ENCODE measurements at regions of chr3 and their contacts with region 1.

Region 1: DNA sequence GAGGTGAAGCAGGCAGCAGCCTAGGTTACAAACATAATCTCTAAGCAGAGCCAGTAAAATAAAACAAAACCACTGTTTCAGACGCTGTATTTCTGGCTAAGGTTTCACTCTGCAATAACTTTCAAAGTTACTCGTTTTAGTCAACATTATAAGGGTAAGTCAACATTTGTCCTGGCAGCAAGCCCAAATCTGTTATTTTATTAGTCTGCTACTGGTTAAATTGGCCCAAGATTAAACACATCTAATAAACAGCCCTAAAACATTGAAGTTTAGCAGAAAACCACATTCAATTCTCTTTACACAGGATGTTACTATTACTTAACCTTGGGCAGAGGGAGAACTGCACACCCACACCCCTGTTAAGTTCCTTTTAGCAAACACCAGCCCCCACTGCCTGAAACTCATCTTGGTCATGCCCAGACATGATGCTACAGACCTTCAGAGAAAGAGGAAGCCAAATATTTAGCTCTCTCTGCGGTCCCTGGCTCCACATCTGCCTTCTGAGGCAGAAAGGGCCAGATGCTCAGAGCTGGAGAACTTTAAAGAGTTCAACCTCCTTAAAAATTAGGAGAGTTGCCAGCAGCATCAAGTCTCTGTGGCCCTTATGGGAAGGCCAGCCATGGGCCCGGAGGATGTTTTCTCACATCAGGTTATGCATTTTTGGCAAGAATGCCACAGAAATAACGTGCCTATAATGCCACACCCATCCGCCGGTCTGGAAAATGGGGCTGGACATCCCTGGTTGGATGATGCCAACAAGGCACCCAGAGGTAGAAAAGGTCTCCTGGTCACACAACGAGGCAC is 17.9 kb downstream of the ARHGEF3 start:
- DNase-seq: peak; percentile 92
- H3K4me3 Mint-ChIP-seq: peak overlapping the region; percentile 75
- H3K27ac Mint-ChIP-seq: peak overlapping the region; percentile 95
- H3K4me1 Mint-ChIP-seq: peaks cover 87% of the 10 kb centered on the region
- H3K27me3 Mint-ChIP-seq: no peaks in the 10 kb centered on the region

Region 2: GRCh38 chr3:56753206-56753820 is 30.5 kb before region 1 on chr3:
- intact Hi-C with region 1: loop called (anchors 1 kb)
- DNase-seq: peak; percentile 82
- H3K4me3 Mint-ChIP-seq: peak overlapping the region; percentile 67
- H3K27ac Mint-ChIP-seq: peak overlapping the region; percentile 80
- H3K4me1 Mint-ChIP-seq: peaks cover 62% of the 10 kb centered on the region
- H3K27me3 Mint-ChIP-seq: no peaks in the 10 kb centered on the region

Region 3: GRCh38 chr3:56758539-56758981 is 25.3 kb before region 1 on chr3:
- intact Hi-C with region 1: loop called (anchors 1 kb)
- DNase-seq: peak; percentile 80
- H3K4me3 Mint-ChIP-seq: peak overlapping the region; percentile 77
- H3K27ac Mint-ChIP-seq: peak overlapping the region; percentile 90
- H3K4me1 Mint-ChIP-seq: peaks cover 75% of the 10 kb centered on the region
- H3K27me3 Mint-ChIP-seq: no peaks in the 10 kb centered on the region

Region 4: DNA sequence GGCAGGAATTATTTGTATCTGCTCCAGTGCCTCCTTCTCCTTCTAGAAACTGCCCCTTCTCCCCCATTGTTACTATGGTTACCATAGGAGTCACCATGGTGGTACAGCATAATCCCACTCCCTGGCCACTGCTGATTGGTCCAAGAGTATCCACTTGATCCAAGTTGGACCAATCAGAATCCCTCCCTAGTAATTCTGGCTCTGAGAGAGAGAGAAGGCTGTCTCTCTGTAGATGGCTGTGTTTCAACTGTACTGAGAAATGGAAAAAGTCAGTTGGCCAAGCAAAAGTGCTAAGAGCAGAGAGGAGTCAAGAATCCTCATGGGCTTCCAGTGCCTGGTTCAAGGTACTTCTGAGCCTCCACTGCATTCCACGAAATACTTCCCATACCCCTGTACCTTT is 156.0 kb after region 1 on chr3:
- intact Hi-C with region 1: no loop called
- DNase-seq: no peak
- H3K4me3 Mint-ChIP-seq: no peak overlapping the region
- H3K27ac Mint-ChIP-seq: no peak overlapping the region
- H3K4me1 Mint-ChIP-seq: peaks cover 20% of the 10 kb centered on the region
- H3K27me3 Mint-ChIP-seq: no peaks in the 10 kb centered on the region

Measured in activated CD4-positive, alpha-beta T cell treated with anti-CD3 and anti-CD28 coated beads, Interleukin-2, amount 10 ng/mL, durations not matched to agents 24 days and 14 days (primary cell).